ENCODE measurements at regions of chr17 and their contacts with region 1.

Region 1: GRCh38 chr17:39668199-39668966 is at the start of gene PNMT:
- DNase-seq: no peak
- H3K4me3 ChIP-seq: peak within 1 kb of the TSS; percentile 43 to 49
- H3K27ac ChIP-seq: peak within 1 kb of the TSS; percentile 7
- H3K4me1 ChIP-seq: peaks cover 58% of the 10 kb centered on the region
- H3K27me3 ChIP-seq: no peaks in the 10 kb centered on the region
- CTCF ChIP-seq: peak in 2 of 3 experiments; percentile 15 to 49
- POLR2A ChIP-seq: no peak
- total RNA-seq, gene PNMT: 5.6 TPM

Region 2: DNA sequence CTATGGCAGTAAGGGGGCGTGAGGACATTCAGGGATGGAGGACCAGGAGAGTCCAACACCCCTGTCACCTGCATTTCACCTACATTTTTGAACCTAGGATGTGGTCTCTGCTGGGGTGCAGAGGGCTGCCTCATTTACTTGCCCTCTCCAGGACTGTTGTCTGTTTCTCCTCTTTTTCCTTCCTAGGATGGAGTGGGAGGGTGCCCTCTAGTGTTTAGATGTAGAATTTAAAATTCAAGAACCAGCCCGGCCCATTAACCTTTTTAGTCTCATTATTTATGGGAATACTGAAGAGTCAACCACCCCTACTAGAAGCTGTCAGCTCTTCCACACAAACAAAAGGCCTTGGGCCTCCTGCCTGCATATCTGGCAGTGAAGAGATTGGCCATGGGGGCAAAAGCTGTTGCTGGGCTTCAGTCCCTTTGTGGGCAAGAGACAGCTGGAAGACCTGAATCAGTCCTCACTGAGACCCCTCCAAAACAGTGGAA is 34.0 kb before region 1 on chr17:
- intact Hi-C with region 1: loop called (anchors 5 kb)
- DNase-seq: no peak
- H3K4me3 ChIP-seq: no peak overlapping the region
- H3K27ac ChIP-seq: no peak overlapping the region
- H3K4me1 ChIP-seq: peaks cover 37% of the 10 kb centered on the region
- H3K27me3 ChIP-seq: no peaks in the 10 kb centered on the region
- CTCF ChIP-seq: peak; percentile 41 to 65 (median 60)
- POLR2A ChIP-seq: no peak

Region 3: DNA sequence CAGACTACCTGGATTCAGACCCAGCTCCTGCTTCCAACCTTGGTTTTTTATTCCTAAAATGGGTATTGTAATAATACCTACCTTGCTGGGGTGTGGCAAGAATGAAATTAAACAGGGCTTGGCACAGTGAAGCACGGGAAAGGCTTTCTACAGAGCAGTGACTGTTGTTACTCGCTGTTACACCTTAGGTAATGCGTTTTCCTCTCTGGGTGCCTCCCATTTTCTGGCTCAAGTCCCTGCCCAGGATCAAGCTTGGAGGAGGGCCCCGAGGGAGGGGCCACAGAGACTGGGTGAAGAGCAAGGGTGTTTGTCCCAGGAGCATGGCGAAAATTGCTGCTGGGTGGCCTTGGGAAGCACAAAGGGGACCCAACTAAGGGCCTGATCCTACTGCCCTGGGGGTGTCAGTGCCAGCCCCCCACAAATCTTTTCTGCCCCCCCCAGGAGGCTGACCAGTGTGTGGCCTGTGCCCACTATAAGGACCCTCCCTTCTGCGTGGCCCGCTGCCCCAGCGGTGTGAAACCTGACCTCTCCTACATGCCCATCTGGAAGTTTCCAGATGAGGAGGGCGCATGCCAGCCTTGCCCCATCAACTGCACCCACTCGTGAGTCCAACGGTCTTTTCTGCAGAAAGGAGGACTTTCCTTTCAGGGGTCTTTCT is 48.6 kb after region 1 on chr17:
- intact Hi-C with region 1: no loop called
- DNase-seq: no peak
- H3K4me3 ChIP-seq: no peak overlapping the region
- H3K27ac ChIP-seq: peak overlapping the region; percentile 75
- H3K4me1 ChIP-seq: peaks cover 13% of the 10 kb centered on the region
- H3K27me3 ChIP-seq: no peaks in the 10 kb centered on the region
- CTCF ChIP-seq: no peak
- POLR2A ChIP-seq: no peak